Calu3 (cell line): ENCODE measurements at regions of chr14 and their contacts with region 1.

Region 1: DNA sequence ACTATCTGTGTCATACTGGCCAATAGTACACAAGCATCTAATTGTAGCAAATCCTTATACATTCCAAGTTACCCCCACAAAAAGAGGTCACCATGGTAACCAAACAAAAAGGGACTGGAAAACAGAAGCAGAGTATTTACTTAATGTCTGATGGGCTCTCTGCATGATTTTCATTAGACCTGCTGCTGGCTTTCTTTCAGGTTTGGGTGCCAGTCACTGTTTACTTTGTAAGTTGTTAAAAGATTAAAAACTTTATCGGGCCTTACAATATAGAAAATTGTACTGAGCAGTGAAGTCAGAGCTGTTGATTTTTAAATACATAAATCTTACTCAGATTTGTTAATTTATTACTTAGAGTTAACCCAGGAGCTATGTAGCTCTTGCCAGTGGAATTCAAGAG is 123.8 kb downstream of the BRMS1L start:
- DNase-seq: peak; percentile 43
- H3K4me3 Mint-ChIP-seq: no peak overlapping the region
- H3K27ac Mint-ChIP-seq: peak overlapping the region; percentile 47
- H3K4me1 Mint-ChIP-seq: peaks cover 13% of the 10 kb centered on the region
- H3K27me3 Mint-ChIP-seq: no peaks in the 10 kb centered on the region
- CTCF ChIP-seq: no peak

Region 2: DNA sequence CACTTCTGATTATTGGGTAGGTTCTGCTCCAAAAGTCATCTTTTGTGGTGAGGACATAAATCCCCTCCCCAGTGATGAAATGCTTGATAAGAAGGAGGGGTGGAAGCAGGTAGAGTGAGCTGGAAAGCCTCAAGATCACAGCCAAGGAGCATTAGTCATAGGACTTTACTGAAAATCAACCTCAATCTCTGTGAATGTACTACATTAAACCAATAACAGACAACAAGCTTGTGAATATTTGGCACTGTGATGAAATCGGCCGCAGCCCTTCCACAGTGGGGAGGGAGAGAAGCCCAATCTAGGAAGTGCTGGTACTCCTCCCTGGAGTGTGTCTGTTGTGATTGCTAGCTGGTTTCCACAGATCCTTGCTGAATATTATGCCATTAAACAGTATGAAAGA is 267.7 kb after region 1 on chr14:
- CTCF ChIA-PET with region 1: no interaction called
- intact Hi-C with region 1: loop called (anchors 10 kb)
- DNase-seq: peak; percentile 36
- H3K4me3 Mint-ChIP-seq: peak overlapping the region; percentile 51
- H3K27ac Mint-ChIP-seq: peak overlapping the region; percentile 67
- H3K4me1 Mint-ChIP-seq: peaks cover 21% of the 10 kb centered on the region
- H3K27me3 Mint-ChIP-seq: no peaks in the 10 kb centered on the region
- CTCF ChIP-seq: no peak